PC-3 (cell line): ENCODE measurements at regions of chr2 and their contacts with region 1.

Region 1: DNA sequence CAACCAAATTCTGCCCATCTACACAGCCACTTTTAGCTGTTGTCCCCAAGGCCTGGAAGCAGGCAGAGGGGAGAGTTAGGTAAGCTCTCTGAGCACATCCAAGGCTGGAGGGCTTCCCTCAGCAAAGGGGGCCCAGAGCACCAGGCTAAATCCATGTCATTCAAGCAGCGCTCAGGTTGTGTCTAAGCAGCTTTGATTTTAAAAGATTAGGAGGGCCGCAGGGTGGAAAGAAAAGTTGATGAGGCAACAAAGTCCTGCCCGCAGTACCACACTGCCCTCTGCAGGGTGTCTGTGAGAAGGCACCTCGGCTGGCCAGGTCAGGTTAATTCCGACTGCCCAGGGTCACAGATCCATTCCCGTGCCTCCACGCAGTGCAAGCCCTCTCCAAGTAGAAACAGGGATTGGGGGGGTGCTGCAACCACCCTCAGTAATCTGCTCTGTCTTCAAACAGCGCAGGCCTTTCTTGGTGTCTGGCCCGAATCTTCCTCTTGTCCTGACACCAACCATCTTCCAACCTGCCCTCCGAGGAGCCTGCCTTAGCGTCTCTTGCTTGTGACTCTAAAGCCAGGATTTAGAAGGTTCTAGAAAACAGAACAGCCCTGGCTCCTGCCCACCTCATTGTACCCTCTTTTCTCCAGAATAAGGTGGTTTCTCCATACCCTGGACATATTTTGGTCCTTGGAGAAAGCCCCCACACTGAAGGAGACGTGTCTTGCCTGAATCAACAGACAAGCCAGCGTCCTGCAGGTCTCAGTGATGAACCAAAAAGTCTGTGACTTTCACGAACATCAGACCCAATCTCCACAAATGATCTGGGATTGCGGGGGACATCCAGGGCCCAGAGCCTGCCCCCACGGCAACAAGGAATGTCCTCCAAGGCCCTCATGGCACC is 289.2 kb downstream of the TNS1 start:
- DNase-seq: peak; percentile 84
- ATAC-seq: peak; percentile 86
- H3K4me3 ChIP-seq: no peak overlapping the region
- H3K27ac ChIP-seq: no peak overlapping the region
- H3K4me1 ChIP-seq: peaks cover 25% of the 10 kb centered on the region
- H3K27me3 ChIP-seq: no peaks in the 10 kb centered on the region
- CTCF ChIP-seq: peak; percentile 93

Region 2: GRCh38 chr2:216519154-216519762 is 1194.4 kb before region 1 on chr2:
- CTCF ChIA-PET with region 1: no interaction called
- POLR2A ChIA-PET with region 1: no interaction called
- intact Hi-C with region 1: loop called (anchors 5 kb)
- DNase-seq: peak; percentile 89
- ATAC-seq: peak; percentile 84
- H3K4me3 ChIP-seq: no peak overlapping the region
- H3K27ac ChIP-seq: no peak overlapping the region
- H3K4me1 ChIP-seq: no peaks in the 10 kb centered on the region
- H3K27me3 ChIP-seq: no peaks in the 10 kb centered on the region
- CTCF ChIP-seq: peak; percentile 91

Region 3: DNA sequence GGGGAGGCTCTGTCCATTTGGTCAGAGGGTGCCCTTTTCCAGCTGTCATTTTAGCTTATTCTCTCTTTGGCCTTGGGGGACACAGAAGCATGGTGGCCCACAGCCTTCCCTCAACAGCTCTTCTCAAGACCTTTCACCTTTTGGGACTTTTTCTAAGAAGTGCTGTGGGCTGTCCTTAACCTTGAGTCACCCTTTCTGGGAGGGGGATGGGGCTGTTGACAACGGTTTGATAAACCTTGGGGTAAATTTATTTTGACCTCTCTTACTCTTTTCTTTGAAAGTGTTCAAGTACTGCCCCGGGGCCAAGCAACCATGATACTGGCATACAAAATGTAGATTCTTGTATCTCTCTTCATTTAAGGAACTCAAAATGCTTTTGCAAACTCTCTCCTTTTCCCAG is 1032.0 kb before region 1 on chr2:
- CTCF ChIA-PET with region 1: interaction called, 13 read pairs
- POLR2A ChIA-PET with region 1: no interaction called
- intact Hi-C with region 1: loop called (anchors 1 kb)
- DNase-seq: no peak
- ATAC-seq: no peak
- H3K4me3 ChIP-seq: no peak overlapping the region
- H3K27ac ChIP-seq: no peak overlapping the region
- H3K4me1 ChIP-seq: peaks cover 5% of the 10 kb centered on the region; the same call in 1 of the 2 replicates
- H3K27me3 ChIP-seq: no peaks in the 10 kb centered on the region
- CTCF ChIP-seq: no peak

Region 4: GRCh38 chr2:216687646-216688045 is 1026.0 kb before region 1 on chr2:
- CTCF ChIA-PET with region 1: interaction called, 13 read pairs
- POLR2A ChIA-PET with region 1: no interaction called
- intact Hi-C with region 1: loop called (anchors 1 kb)
- DNase-seq: no peak
- ATAC-seq: no peak
- H3K4me3 ChIP-seq: no peak overlapping the region
- H3K27ac ChIP-seq: no peak overlapping the region
- H3K4me1 ChIP-seq: peaks cover 13% of the 10 kb centered on the region; the same call in 1 of the 2 replicates
- H3K27me3 ChIP-seq: no peaks in the 10 kb centered on the region
- CTCF ChIP-seq: peak; percentile 63

Region 5: GRCh38 chr2:216698895-216699294 is 1014.7 kb before region 1 on chr2:
- CTCF ChIA-PET with region 1: interaction called, 3 read pairs
- POLR2A ChIA-PET with region 1: no interaction called
- intact Hi-C with region 1: loop called (anchors 1 kb)
- DNase-seq: peak; percentile 74
- ATAC-seq: peak; percentile 68
- H3K4me3 ChIP-seq: no peak overlapping the region
- H3K27ac ChIP-seq: no peak overlapping the region
- H3K4me1 ChIP-seq: peaks cover 35% of the 10 kb centered on the region
- H3K27me3 ChIP-seq: no peaks in the 10 kb centered on the region
- CTCF ChIP-seq: peak; percentile 86

Region 6: GRCh38 chr2:217000404-217000803 is 713.2 kb before region 1 on chr2:
- CTCF ChIA-PET with region 1: no interaction called
- POLR2A ChIA-PET with region 1: no interaction called
- intact Hi-C with region 1: loop called (anchors 2 kb)
- DNase-seq: peak; percentile 27
- ATAC-seq: peak; percentile 64
- H3K4me3 ChIP-seq: no peak overlapping the region
- H3K27ac ChIP-seq: no peak overlapping the region
- H3K4me1 ChIP-seq: no peaks in the 10 kb centered on the region
- H3K27me3 ChIP-seq: no peaks in the 10 kb centered on the region
- CTCF ChIP-seq: peak; percentile 33; the same call in 1 of the 2 replicates

Region 7: GRCh38 chr2:217166241-217166850 is 547.3 kb before region 1 on chr2:
- CTCF ChIA-PET with region 1: no interaction called
- POLR2A ChIA-PET with region 1: no interaction called
- intact Hi-C with region 1: loop called (anchors 10 kb)
- DNase-seq: peak; percentile 65
- ATAC-seq: no peak; the same call in 1 of the 2 replicates
- H3K4me3 ChIP-seq: no peak overlapping the region
- H3K27ac ChIP-seq: no peak overlapping the region
- H3K4me1 ChIP-seq: peaks cover 27% of the 10 kb centered on the region
- H3K27me3 ChIP-seq: no peaks in the 10 kb centered on the region
- CTCF ChIP-seq: peak; percentile 79

Region 8: DNA sequence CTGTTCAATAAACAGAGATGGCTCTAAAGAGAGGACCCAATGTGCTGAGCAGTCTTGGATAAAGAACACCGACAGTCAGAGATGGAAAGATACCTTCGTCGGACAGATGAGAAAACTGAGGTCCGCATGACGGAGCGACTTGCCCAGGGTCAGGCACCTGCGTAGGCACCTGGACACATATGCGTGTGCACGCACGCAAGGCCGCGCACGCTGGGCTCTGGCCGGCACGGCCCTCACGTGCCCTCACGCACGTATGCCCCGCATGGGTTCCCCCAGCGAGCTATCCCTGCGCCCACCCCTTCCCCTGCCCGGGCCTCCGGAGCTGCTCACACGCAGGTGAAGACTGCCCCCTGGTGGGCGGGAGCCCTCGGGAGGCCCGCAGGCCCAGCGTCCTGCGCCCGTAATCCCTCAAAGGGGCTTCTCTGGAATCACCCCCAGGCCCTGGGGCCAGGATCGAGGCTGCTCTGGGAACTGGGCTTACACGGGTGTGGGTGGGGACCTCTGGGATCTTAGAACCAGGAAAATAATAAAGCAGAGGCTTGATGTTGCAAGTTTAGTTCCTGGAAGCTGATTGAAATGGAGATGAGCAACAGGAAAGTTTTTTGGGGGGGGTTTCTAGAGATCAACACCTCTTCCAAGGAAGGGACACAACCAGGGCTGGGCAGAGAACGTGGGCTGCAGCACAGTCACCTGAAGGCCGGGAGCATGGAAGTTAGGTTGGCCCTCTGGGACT is 42.9 kb after region 1 on chr2:
- CTCF ChIA-PET with region 1: no interaction called
- POLR2A ChIA-PET with region 1: no interaction called
- intact Hi-C with region 1: no loop called
- DNase-seq: peak; percentile 58
- ATAC-seq: peak; percentile 60; the same call in 1 of the 2 replicates
- H3K4me3 ChIP-seq: no peak overlapping the region
- H3K27ac ChIP-seq: no peak overlapping the region
- H3K4me1 ChIP-seq: no peaks in the 10 kb centered on the region
- H3K27me3 ChIP-seq: peaks cover 23% of the 10 kb centered on the region
- CTCF ChIP-seq: peak; percentile 93

Region 9: GRCh38 chr2:217943446-217944389 is 230.1 kb after region 1 on chr2:
- CTCF ChIA-PET with region 1: no interaction called
- POLR2A ChIA-PET with region 1: no interaction called
- intact Hi-C with region 1: no loop called
- DNase-seq: no peak
- ATAC-seq: no peak; the same call in 1 of the 2 replicates
- H3K4me3 ChIP-seq: no peak overlapping the region
- H3K27ac ChIP-seq: no peak overlapping the region
- H3K4me1 ChIP-seq: no peaks in the 10 kb centered on the region
- H3K27me3 ChIP-seq: peaks cover 84% of the 10 kb centered on the region
- CTCF ChIP-seq: no peak